ENCODE measurements at regions of chr1 and their contacts with region 1.

Region 1: GRCh38 chr1:168234846-168235547 is 9.2 kb downstream of the SFT2D2 start:
- DNase-seq: peak; percentile 63
- H3K4me3 Mint-ChIP-seq: no peak overlapping the region
- H3K27ac Mint-ChIP-seq: peak overlapping the region; percentile 79
- H3K4me1 Mint-ChIP-seq: peaks cover 61% of the 10 kb centered on the region
- H3K27me3 Mint-ChIP-seq: no peaks in the 10 kb centered on the region

Region 2: DNA sequence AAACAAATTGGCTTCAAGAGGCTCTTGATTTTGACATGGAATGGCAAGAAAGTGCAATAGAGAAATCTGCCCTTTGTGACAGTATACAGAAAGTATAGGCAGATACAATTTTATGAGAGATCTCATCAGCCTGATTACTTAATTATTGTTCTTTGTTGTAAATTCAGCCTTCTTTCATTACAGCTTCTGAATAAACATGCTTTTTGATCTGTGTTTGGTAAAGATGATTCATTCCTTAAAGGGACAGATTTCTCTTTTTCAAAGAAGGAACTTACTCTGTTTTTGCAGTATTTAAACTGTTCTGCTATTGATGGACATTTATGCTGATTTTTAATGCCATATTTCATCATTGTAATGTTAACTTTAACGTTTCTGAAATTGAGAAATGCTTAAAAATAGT is 284.4 kb before region 1 on chr1:
- CTCF ChIA-PET with region 1: no interaction called
- POLR2A ChIA-PET with region 1: no interaction called
- intact Hi-C with region 1: no loop called
- DNase-seq: no peak
- H3K4me3 Mint-ChIP-seq: no peak overlapping the region
- H3K27ac Mint-ChIP-seq: no peak overlapping the region
- H3K4me1 Mint-ChIP-seq: peaks cover 30% of the 10 kb centered on the region
- H3K27me3 Mint-ChIP-seq: no peaks in the 10 kb centered on the region

Region 3: GRCh38 chr1:168178638-168179437 is 56.2 kb before region 1 on chr1 and contains the start of gene TIPRL:
- CTCF ChIA-PET with region 1: interaction called, 13 read pairs
- POLR2A ChIA-PET with region 1: interaction called, 5 read pairs
- intact Hi-C with region 1: loop called (anchors 1 kb)
- DNase-seq: peak; percentile 96
- H3K4me3 Mint-ChIP-seq: no peak within 1 kb of the TSS
- H3K27ac Mint-ChIP-seq: no peak within 1 kb of the TSS
- H3K4me1 Mint-ChIP-seq: peaks cover 10% of the 10 kb centered on the region
- H3K27me3 Mint-ChIP-seq: no peaks in the 10 kb centered on the region
- total RNA-seq, gene TIPRL: 51.1 to 54.2 TPM

Region 4: GRCh38 chr1:168210312-168210711 is 24.7 kb before region 1 on chr1:
- CTCF ChIA-PET with region 1: no interaction called
- POLR2A ChIA-PET with region 1: no interaction called
- intact Hi-C with region 1: no loop called
- DNase-seq: no peak
- H3K4me3 Mint-ChIP-seq: no peak overlapping the region
- H3K27ac Mint-ChIP-seq: no peak overlapping the region
- H3K4me1 Mint-ChIP-seq: no peaks in the 10 kb centered on the region
- H3K27me3 Mint-ChIP-seq: no peaks in the 10 kb centered on the region

Region 5: GRCh38 chr1:168321945-168322344 is 86.9 kb after region 1 on chr1:
- CTCF ChIA-PET with region 1: interaction called, 9 read pairs
- POLR2A ChIA-PET with region 1: no interaction called
- intact Hi-C with region 1: loop called (anchors 2 kb)
- DNase-seq: no peak
- H3K4me3 Mint-ChIP-seq: no peak overlapping the region
- H3K27ac Mint-ChIP-seq: no peak overlapping the region
- H3K4me1 Mint-ChIP-seq: peaks cover 10% of the 10 kb centered on the region
- H3K27me3 Mint-ChIP-seq: no peaks in the 10 kb centered on the region

Region 6: GRCh38 chr1:168408536-168409242 is 173.7 kb after region 1 on chr1:
- CTCF ChIA-PET with region 1: no interaction called
- POLR2A ChIA-PET with region 1: no interaction called
- intact Hi-C with region 1: loop called (anchors 2 kb)
- DNase-seq: peak; percentile 75
- H3K4me3 Mint-ChIP-seq: peak overlapping the region; percentile 9
- H3K27ac Mint-ChIP-seq: peak overlapping the region; percentile 53
- H3K4me1 Mint-ChIP-seq: peaks cover 40% of the 10 kb centered on the region
- H3K27me3 Mint-ChIP-seq: no peaks in the 10 kb centered on the region

Region 7: GRCh38 chr1:169491845-169492281 is 1256.9 kb after region 1 on chr1:
- CTCF ChIA-PET with region 1: no interaction called
- POLR2A ChIA-PET with region 1: no interaction called
- intact Hi-C with region 1: loop called (anchors 5 kb)
- DNase-seq: peak; percentile 82
- H3K4me3 Mint-ChIP-seq: no peak overlapping the region
- H3K27ac Mint-ChIP-seq: peak overlapping the region; percentile 47
- H3K4me1 Mint-ChIP-seq: peaks cover 56% of the 10 kb centered on the region
- H3K27me3 Mint-ChIP-seq: peaks cover 3% of the 10 kb centered on the region